Dorsolateral prefrontal cortex (tissue), 120 donors: ENCODE measurements at regions of chr11 and their contacts with region 1.

Region 1: DNA sequence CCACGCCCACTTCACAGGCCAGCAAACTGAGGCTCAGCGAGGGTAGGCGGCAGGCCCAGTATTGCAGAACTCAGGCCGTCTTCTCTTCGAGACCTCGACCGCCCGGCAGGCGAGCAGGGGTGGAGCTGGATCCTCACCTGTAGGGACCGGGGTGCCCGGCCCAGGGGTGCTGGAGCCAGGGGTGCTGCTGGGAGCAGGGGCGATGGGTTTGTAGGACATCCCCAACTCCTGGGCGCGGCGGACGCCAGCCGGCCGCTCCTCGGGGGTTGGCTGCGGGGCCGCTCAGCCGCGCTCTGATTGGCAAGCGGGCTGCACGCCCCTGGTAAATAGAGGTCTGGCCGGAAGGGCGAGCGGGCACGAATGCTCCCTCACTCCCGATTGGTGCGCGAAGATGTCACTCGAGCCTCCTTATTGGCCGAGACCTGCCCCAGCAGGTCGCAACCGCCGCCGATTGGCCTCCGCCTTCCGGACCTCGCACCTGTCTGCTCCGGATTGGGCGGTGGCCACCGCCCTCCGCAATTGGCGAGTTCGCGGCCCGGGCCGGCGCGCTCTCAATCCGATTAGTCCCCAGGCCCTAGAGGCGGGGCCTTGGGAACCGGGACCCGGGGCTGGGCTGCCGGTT is at the start of gene CDK2AP2:
- DNase-seq: peak; percentile 97 to 100 (median 99)
- H3K4me3 ChIP-seq: peak within 1 kb of the TSS; percentile 60 to 99 (median 90)
- H3K27ac ChIP-seq: peak within 1 kb of the TSS; percentile 80 to 100 (median 99)
- H3K27me3 ChIP-seq: peaks cover 0 to 8% (median 0%) of the 10 kb centered on the region in 45 donors
- CTCF ChIP-seq: peak in 15 of 56 donors; percentile 2 to 50 (median 10)
- total RNA-seq, gene CDK2AP2: 16.6 to 82.7 (median 33.4) TPM

Region 2: GRCh38 chr11:67006139-67006884 is 501.7 kb before region 1 on chr11:
- intact Hi-C with region 1: no loop called
- DNase-seq: peak in 3 of 10 donors; percentile 39 to 51 (median 40)
- H3K4me3 ChIP-seq: no peak overlapping the region
- H3K27ac ChIP-seq: no peak overlapping the region
- H3K27me3 ChIP-seq: no peaks in the 10 kb centered on the region
- CTCF ChIP-seq: no peak

Region 3: GRCh38 chr11:67401495-67402191 is 106.3 kb before region 1 on chr11 and contains the start of gene PPP1CA:
- intact Hi-C with region 1: loop called (anchors 5 kb)
- DNase-seq: peak; percentile 83 to 95 (median 90)
- H3K4me3 ChIP-seq: peak within 1 kb of the TSS; percentile 64 to 100 (median 95)
- H3K27ac ChIP-seq: peak within 1 kb of the TSS; percentile 82 to 100 (median 96)
- H3K27me3 ChIP-seq: no peaks in the 10 kb centered on the region
- CTCF ChIP-seq: peak in 49 of 56 donors; percentile 8 to 75 (median 40)
- total RNA-seq, gene PPP1CA: 47.4 to 86.5 (median 66.9) TPM

Region 4: GRCh38 chr11:67442504-67443405 is 65.2 kb before region 1 on chr11:
- intact Hi-C with region 1: loop called in 1 of 2 experiments (anchors 10 kb)
- DNase-seq: no peak
- H3K4me3 ChIP-seq: peak overlapping the region; percentile 43 to 92 (median 79)
- H3K27ac ChIP-seq: peak overlapping the region; percentile 70 to 99 (median 95)
- H3K27me3 ChIP-seq: no peaks in the 10 kb centered on the region
- CTCF ChIP-seq: no peak

Region 5: DNA sequence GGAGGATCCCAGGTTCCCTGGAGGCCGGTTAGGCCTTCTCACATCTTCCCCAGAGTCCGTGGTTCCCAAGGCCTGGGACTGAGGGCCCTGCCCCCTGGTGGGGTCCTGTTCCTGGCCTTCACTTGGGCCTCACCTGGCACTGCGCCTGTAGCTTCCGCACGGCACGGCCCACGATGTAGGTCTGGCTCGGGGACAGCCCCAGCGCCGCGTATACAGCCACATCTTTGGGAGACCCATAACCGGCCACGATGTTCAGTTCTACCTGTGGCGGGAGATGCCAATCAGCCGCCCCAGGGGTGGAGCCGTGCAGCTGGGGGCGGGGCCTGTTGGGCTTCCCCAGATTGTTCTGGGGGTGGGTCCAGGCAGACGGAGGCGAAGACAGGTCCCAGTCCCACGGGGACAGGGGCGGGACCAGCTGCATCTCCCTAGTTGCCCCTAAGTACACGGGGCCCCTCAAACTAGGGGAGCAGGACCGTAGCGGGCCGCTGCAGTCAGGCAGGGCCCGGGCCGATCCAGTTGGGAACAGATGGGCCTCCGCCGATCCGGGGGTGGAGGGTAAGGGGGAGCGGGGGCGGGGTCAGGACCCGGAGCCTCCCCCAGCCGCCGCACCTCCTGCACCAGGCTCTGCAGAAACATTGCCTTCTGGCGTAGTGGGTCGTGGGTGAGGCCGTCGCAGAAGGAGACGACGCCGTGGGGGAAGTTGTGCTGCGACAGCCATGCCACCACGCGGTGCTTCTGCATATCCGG is 15.0 kb before region 1 on chr11:
- intact Hi-C with region 1: no loop called
- DNase-seq: no peak
- H3K4me3 ChIP-seq: no peak overlapping the region
- H3K27ac ChIP-seq: peak overlapping the region in 3 of 59 donors; percentile 18 to 65 (median 39)
- H3K27me3 ChIP-seq: no peaks in the 10 kb centered on the region
- CTCF ChIP-seq: no peak

Region 6: GRCh38 chr11:67583247-67584204 is 75.6 kb after region 1 on chr11 and contains the start of gene GSTP1:
- intact Hi-C with region 1: loop called in 1 of 2 experiments (anchors 5 kb)
- DNase-seq: peak; percentile 76 to 95 (median 88)
- H3K4me3 ChIP-seq: peak within 1 kb of the TSS; percentile 55 to 89 (median 79)
- H3K27ac ChIP-seq: peak within 1 kb of the TSS; percentile 79 to 99 (median 96)
- H3K27me3 ChIP-seq: no peaks in the 10 kb centered on the region
- CTCF ChIP-seq: peak; percentile 27 to 88 (median 74)
- total RNA-seq, gene GSTP1: 145 to 281 (median 207) TPM

Region 7: GRCh38 chr11:67732045-67732787 is 224.2 kb after region 1 on chr11:
- intact Hi-C with region 1: no loop called
- DNase-seq: no peak
- H3K4me3 ChIP-seq: peak overlapping the region in 33 of 59 donors; percentile 9 to 56 (median 35)
- H3K27ac ChIP-seq: no peak overlapping the region
- H3K27me3 ChIP-seq: peaks cover 0 to 18% (median 4%) of the 10 kb centered on the region in 45 donors
- CTCF ChIP-seq: peak in 17 of 56 donors; percentile 7 to 40 (median 24)